AG04450 (cell line): ENCODE measurements at regions of chr6 and their contacts with region 1.

Region 1: DNA sequence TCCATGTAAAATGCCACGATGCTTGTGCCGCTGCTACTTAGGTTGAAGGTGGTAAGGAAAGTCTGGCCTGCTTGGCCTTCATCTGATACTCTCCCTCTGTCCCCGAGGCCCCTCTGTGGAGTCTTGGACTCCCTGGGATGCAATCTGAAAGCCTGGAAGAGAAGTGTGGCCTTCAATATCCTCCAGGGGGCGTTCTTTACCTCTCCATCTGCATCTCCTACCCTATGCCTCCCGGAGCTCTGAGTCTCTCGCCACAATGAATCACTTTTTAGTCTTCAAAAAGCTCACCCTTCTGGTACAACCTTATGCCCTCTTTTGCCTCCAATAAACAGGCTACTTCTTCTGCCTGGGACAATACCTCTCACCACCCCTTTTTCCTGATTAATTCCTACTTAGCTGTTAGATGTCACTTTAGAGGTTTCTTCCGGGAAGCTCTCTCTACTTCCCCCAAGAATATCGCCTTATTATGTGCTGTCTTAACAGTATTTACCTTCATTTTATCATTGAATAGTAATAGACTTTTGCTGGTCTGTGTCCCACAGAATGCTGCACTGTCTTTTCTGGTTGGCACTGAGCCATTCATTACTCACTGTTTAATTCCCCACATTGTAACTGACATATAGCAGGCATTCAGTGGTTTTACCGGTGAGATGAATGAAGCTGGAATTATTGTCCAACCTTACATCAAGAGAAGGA is 13.9 kb upstream of the ATG5 start:
- DNase-seq: peak; percentile 24
- H3K4me3 ChIP-seq: no peak overlapping the region
- H3K27ac ChIP-seq: no peak overlapping the region
- H3K27me3 ChIP-seq: no peaks in the 10 kb centered on the region
- CTCF ChIP-seq: peak; percentile 86

Region 2: DNA sequence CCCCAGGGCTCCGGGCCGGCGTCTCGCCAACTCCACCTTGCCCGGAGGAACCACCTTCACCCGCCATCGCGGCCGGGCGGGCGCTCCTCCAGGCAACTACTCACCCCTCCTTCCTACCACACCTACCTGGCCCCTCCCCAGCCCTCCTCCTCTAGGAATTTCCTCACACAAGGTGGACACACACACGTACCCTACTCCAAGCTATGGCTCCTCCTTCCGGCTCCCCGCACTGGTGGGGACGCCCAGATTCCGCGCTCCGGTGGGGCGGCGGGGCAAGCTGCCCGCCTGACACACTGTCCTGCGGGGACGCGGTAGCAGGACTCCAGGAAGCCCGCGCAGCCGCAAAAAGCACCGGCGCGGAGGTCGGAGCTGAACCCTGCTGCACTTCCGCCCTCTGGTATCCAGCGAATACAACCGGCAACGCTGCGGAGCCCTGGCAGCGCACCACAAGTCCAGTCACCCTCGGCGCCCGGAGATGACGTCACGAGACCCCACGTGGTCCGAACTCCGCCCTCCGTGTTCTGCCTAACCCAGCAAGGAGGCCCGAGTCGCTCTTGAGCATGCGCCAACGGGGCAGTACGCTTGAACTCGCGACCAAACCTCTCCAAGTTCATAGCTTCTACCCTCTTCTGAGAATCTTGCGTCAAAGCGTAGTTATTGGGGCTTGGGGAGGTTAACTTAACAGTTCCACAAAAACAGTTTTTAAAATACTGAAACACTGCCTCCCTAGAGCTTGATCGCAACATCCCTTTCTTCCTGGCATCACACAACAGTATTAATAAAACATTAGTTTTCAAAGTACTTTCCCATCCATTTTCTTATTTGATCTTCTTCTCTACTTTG is 13.9 kb before region 1 on chr6 and contains the start of gene ATG5:
- CTCF ChIA-PET with region 1: interaction called, 10 read pairs
- POLR2A ChIA-PET with region 1: no interaction called
- DNase-seq: peak; percentile 98
- H3K4me3 ChIP-seq: peak within 1 kb of the TSS; percentile 99
- H3K27ac ChIP-seq: peak within 1 kb of the TSS; percentile 94
- H3K27me3 ChIP-seq: peaks cover 13% of the 10 kb centered on the region
- CTCF ChIP-seq: 0 out of 2 replicates have a peak, but pooled peaks have one; percentile 1
- polyA plus RNA-seq, gene ATG5: 35.7 and 53.9 TPM in 2 replicates

Region 3: GRCh38 chr6:106360410-106360988 is 21.0 kb after region 1 on chr6 and contains the start of gene CRYBG1:
- CTCF ChIA-PET with region 1: interaction called, 12 read pairs
- POLR2A ChIA-PET with region 1: no interaction called
- DNase-seq: no peak
- H3K4me3 ChIP-seq: peak within 1 kb of the TSS; percentile 44
- H3K27ac ChIP-seq: no peak within 1 kb of the TSS
- H3K27me3 ChIP-seq: peaks cover 42% of the 10 kb centered on the region
- CTCF ChIP-seq: peak; percentile 76
- polyA plus RNA-seq, gene CRYBG1: 1.8 and 1.9 TPM in 2 replicates

Region 4: GRCh38 chr6:106568530-106568929 is 229.0 kb after region 1 on chr6:
- CTCF ChIA-PET with region 1: interaction called, 24 read pairs
- POLR2A ChIA-PET with region 1: no interaction called
- DNase-seq: no peak
- H3K4me3 ChIP-seq: no peak overlapping the region
- H3K27ac ChIP-seq: no peak overlapping the region
- H3K27me3 ChIP-seq: no peaks in the 10 kb centered on the region
- CTCF ChIP-seq: no peak

Region 5: DNA sequence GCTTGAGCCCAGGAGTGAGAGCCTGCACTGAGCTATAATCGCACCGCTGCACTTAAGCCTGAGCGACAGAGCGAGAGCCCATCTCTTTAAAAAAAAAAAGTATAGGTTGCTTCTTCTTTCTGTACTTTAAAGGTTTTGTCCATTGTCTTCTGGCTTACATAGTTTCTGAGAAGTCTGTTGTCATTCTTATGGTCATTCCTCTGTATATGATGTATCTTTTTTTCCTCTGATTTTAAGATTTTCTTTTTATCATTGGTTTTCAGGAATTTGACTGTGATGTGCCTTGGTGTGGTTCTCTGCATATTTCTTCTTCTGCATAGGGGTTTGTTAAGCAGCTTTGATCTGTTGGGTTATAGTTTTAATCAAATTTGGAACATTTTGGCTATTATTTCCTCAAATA is 319.0 kb after region 1 on chr6:
- CTCF ChIA-PET with region 1: no interaction called
- POLR2A ChIA-PET with region 1: no interaction called
- DNase-seq: no peak
- H3K4me3 ChIP-seq: no peak overlapping the region
- H3K27ac ChIP-seq: no peak overlapping the region
- H3K27me3 ChIP-seq: no peaks in the 10 kb centered on the region
- CTCF ChIP-seq: no peak

Region 6: GRCh38 chr6:106979427-106979884 is 640.0 kb after region 1 on chr6:
- CTCF ChIA-PET with region 1: interaction called, 34 read pairs
- POLR2A ChIA-PET with region 1: no interaction called
- DNase-seq: peak; percentile 55
- H3K4me3 ChIP-seq: peak overlapping the region; percentile 1; the same call in 1 of the 2 replicates
- H3K27ac ChIP-seq: no peak overlapping the region
- H3K27me3 ChIP-seq: peaks cover 25% of the 10 kb centered on the region
- CTCF ChIP-seq: peak; percentile 98